Heart right ventricle (tissue), 16 donors: ENCODE measurements at regions of chr1 and their contacts with region 1.

Region 1: GRCh38 chr1:228457396-228458176 is 29.6 kb upstream of the RNF187 start:
- DNase-seq: peak; percentile 84 to 93
- ATAC-seq: peak; percentile 94 to 97 (median 95)
- H3K4me3 ChIP-seq: peak overlapping the region; percentile 44 to 77 (median 62)
- H3K27ac ChIP-seq: peak overlapping the region; percentile 55 to 93 (median 86)
- H3K4me1 ChIP-seq: peaks cover 3 to 56% (median 36%) of the 10 kb centered on the region in 9 donors
- H3K27me3 ChIP-seq: peaks cover 0 to 50% (median 33%) of the 10 kb centered on the region in 7 donors
- CTCF ChIP-seq: peak in 7 of 9 donors; percentile 25 to 58 (median 43)

Region 2: DNA sequence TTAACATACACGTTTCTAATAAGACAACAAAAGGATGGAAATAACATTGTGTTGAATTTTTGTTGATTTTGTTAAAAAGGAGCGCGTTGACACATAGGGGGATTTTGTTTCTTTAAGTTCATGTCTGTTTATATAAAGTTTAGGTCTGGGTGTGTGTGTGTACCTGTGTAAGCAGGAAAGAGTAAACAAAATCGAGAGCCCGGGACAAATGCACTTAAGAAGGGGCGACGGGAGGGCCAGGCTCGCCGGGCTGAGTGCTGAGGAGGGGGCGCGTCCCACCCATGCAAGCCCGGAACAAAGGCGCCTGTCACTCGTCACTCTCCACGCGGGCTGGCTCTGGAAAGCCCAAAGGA is 12.1 kb before region 1 on chr1:
- intact Hi-C with region 1: no loop called
- DNase-seq: no peak
- ATAC-seq: no peak
- H3K4me3 ChIP-seq: peak overlapping the region; percentile 12 to 63 (median 51)
- H3K27ac ChIP-seq: peak overlapping the region in 2 of 10 donors; percentile 20 to 44
- H3K4me1 ChIP-seq: peaks cover 0 to 16% (median 12%) of the 10 kb centered on the region in 9 donors
- H3K27me3 ChIP-seq: peaks cover 0 to 63% (median 37%) of the 10 kb centered on the region in 7 donors
- CTCF ChIP-seq: no peak

Region 3: GRCh38 chr1:228486596-228487335 is 29.2 kb after region 1 on chr1:
- intact Hi-C with region 1: loop called in 1 of 10 experiments (anchors 2 kb)
- DNase-seq: peak; percentile 72 to 84
- ATAC-seq: peak; percentile 85 to 94 (median 88)
- H3K4me3 ChIP-seq: peak overlapping the region; percentile 55 to 97 (median 82)
- H3K27ac ChIP-seq: peak overlapping the region; percentile 97 to 100 (median 100)
- H3K4me1 ChIP-seq: peaks cover 17 to 51% (median 40%) of the 10 kb centered on the region in 9 donors
- H3K27me3 ChIP-seq: no peaks in the 10 kb centered on the region
- CTCF ChIP-seq: no peak